ENCODE measurements at regions of chr9 and their contacts with region 1.

Region 1: DNA sequence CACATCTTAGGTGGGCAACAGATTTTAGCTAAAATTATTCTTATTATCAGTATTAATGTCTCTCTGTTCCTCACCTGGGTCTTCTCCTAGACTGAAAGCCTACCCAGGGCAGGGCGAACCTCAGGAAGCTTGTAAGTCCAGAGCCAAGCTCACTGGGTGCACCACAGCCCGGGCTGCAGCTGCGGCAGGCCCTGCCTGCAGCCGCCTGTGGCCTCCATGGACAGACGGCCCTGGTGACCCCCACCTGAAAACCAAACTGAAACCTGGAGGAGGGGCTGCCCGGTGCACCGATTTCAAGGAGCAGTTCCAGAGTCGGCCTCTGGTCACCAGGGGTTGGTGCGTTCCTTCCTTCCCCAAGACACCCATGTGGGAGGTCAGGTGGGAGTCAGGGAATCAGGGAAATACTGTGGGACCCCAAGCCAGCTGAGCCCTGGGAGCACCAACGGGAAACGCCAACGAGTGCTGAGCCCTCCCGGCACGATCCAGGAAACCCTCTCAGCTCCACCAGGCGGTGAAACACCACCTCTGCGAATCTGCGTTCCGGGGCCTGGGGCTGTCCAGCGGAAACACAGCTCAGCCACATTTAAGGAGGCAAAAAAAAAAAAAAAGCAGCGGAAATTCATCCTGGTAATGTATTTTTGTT is 68.6 kb upstream of the PPP1R26 start:
- H3K4me3 ChIP-seq: no peak overlapping the region
- H3K27ac ChIP-seq: no peak overlapping the region
- H3K4me1 ChIP-seq: no peaks in the 10 kb centered on the region
- CTCF ChIP-seq: no peak

Region 2: DNA sequence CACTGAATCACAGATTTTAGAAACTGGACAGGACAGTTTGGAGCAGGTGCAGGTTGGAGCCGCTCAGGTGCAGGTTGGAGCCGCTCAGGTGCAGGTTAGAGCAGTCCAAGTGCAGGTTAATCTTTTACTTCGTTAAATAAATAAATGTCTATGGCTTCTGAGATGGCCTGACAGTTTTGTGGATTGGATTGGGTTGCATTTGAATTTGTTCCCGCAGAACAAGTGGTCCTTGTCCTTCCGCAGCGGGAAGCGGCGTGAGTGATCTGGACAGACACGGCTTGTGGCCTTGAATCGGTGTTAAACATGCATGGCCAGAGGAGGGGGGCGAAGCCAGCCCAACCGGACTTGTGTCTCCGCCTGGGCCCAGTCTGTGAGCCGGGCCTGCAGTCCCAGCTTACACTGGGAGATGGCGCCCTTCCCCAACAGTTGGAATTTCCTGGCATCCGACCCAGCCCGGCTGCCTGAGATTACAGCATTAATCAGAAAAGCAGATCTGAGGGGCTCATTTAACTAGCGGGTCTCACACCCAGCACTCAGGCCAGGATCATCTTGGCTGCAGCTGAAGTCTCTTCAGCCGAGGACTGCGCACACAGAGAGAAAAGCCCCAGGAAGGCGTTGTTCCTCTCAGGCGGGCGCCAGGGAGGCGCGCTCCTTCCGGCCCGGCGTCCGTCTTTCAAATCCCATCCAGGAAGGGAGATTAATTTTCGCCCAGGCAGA is 325.0 kb before region 1 on chr9:
- CTCF ChIA-PET with region 1: interaction called, 110 read pairs
- POLR2A ChIA-PET with region 1: no interaction called
- H3K4me3 ChIP-seq: no peak overlapping the region
- H3K27ac ChIP-seq: no peak overlapping the region
- H3K4me1 ChIP-seq: no peaks in the 10 kb centered on the region
- CTCF ChIP-seq: peak; percentile 89

Region 3: GRCh38 chr9:135294826-135295225 is 116.1 kb before region 1 on chr9:
- CTCF ChIA-PET with region 1: interaction called, 11 read pairs
- POLR2A ChIA-PET with region 1: no interaction called
- H3K4me3 ChIP-seq: no peak overlapping the region
- H3K27ac ChIP-seq: no peak overlapping the region
- H3K4me1 ChIP-seq: no peaks in the 10 kb centered on the region
- CTCF ChIP-seq: no peak

Region 4: GRCh38 chr9:135388530-135388929 is 22.4 kb before region 1 on chr9:
- CTCF ChIA-PET with region 1: interaction called, 12 read pairs
- POLR2A ChIA-PET with region 1: no interaction called
- H3K4me3 ChIP-seq: no peak overlapping the region
- H3K27ac ChIP-seq: no peak overlapping the region
- H3K4me1 ChIP-seq: no peaks in the 10 kb centered on the region
- CTCF ChIP-seq: no peak

Region 5: GRCh38 chr9:135440620-135441019 is 29.7 kb after region 1 on chr9:
- CTCF ChIA-PET with region 1: interaction called, 11 read pairs
- POLR2A ChIA-PET with region 1: interaction called, 3 read pairs
- H3K4me3 ChIP-seq: no peak overlapping the region
- H3K27ac ChIP-seq: no peak overlapping the region
- H3K4me1 ChIP-seq: no peaks in the 10 kb centered on the region; the same call in 1 of the 2 replicates
- CTCF ChIP-seq: no peak

Region 6: DNA sequence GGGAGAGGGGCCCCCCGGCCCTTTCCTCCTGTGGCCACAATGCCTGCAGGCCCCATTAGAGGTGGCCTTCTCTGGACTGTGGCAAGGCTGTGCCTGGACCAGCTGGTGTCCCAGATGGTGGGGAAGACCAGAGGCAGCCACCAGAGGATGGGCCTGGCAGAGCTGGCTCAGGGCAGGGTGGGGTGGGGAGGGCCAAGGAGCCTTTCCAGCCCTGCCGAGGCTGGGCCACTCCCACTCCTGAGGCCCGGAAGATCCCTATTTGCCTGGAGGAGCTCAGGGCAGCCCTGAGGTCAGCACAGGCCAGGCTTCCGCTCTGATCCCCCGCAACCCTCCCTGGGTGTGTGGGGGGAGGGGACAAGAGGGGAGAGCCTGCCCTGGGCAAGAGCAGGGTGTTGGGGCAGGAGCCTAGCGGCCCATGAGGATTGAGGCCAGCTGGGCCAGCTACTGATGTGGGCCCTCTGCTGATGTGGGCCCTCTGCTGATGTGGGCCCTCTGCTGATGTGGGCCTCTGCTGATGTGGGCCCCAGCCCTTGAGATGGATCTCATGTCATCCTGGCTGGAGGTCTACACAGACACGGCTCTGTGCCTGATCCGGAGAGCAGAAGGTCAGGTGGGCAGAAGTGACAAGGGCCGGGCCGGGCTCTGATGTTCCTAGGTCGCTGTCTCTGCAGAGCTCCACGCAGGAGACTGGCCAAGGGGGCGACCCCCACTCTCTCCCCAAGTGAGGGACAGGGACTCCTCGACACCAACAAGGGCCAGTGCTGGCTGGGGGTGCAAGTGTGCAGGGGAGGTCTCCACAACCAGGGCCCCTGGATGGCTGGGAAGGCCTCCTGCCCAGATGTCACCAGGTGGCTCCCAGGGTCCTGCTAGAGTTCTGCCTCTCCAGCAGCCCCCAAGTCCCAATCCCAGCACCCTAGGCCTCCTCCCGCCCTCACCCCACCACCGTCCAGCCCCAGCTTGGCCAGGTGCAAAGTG is 95.7 kb after region 1 on chr9:
- CTCF ChIA-PET with region 1: no interaction called
- POLR2A ChIA-PET with region 1: no interaction called
- H3K4me3 ChIP-seq: no peak overlapping the region
- H3K27ac ChIP-seq: no peak overlapping the region
- H3K4me1 ChIP-seq: peaks cover 3% of the 10 kb centered on the region; the same call in 1 of the 2 replicates
- CTCF ChIP-seq: no peak